PC-9 (cell line): ENCODE measurements at regions of chr11 and their contacts with region 1.

Region 1: DNA sequence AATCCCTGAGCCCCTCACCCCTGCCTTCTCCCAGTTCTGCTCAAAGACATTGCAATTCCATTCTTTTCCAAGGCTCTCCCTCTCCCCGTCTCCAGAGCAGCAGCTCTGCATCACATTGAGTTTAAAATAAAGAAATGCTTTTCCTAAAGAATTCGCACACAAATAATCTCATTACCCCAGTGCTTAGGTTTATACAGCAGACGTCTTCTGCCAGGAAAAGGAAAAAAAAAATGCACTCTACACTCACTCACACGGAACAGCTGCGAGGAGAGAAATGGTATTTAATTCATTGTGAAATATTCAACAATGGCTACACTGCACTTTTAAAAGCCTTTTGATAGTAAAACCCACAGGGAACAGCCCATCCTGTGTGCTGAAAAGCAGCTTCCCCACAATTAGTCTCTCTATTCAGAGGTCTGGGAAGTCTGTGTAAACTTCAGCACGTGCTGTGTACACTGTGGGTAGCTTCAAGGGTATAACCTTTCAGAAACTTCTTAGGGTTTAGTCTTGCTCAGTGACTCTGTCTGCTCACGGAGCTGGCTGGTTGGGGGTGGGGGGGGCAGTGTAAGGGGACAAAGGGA is 42.8 kb downstream of the ETS1 start:
- DNase-seq: no peak
- H3K4me3 ChIP-seq: no peak overlapping the region
- H3K27ac ChIP-seq: no peak overlapping the region
- H3K4me1 ChIP-seq: no peaks in the 10 kb centered on the region
- H3K27me3 ChIP-seq: no peaks in the 10 kb centered on the region
- CTCF ChIP-seq: no peak

Region 2: GRCh38 chr11:128379587-128380580 is 164.7 kb before region 1 on chr11:
- CTCF ChIA-PET with region 1: no interaction called
- POLR2A ChIA-PET with region 1: no interaction called
- intact Hi-C with region 1: no loop called
- DNase-seq: peak in 1 of 2 experiments; percentile 37
- H3K4me3 ChIP-seq: no peak overlapping the region
- H3K27ac ChIP-seq: no peak overlapping the region
- H3K4me1 ChIP-seq: peaks cover 7% of the 10 kb centered on the region; the same call in 1 of the 2 replicates
- H3K27me3 ChIP-seq: no peaks in the 10 kb centered on the region
- CTCF ChIP-seq: no peak

Region 3: GRCh38 chr11:128582496-128583366 is 38.2 kb after region 1 on chr11:
- CTCF ChIA-PET with region 1: interaction called, 5 read pairs
- POLR2A ChIA-PET with region 1: no interaction called
- intact Hi-C with region 1: loop called (anchors 1 kb)
- DNase-seq: peak; percentile 71 to 89
- H3K4me3 ChIP-seq: peak overlapping the region; percentile 28; the same call in 1 of the 2 replicates
- H3K27ac ChIP-seq: peak overlapping the region; percentile 52
- H3K4me1 ChIP-seq: peaks cover 20% of the 10 kb centered on the region
- H3K27me3 ChIP-seq: no peaks in the 10 kb centered on the region
- CTCF ChIP-seq: no peak